Activated CD4-positive, alpha-beta T cell treated with anti-CD3 and anti-CD28 coated beads for 36 hours (primary cell): ENCODE measurements at regions of chr11 and their contacts with region 1.

Region 1: GRCh38 chr11:73661035-73661628 is 14.8 kb downstream of the PLEKHB1 start:
- DNase-seq: peak; percentile 92
- ATAC-seq: peak; percentile 92
- H3K4me3 Mint-ChIP-seq: peak overlapping the region; percentile 24
- H3K27ac Mint-ChIP-seq: no peak overlapping the region
- H3K4me1 Mint-ChIP-seq: peaks cover 10% of the 10 kb centered on the region
- H3K27me3 Mint-ChIP-seq: no peaks in the 10 kb centered on the region

Region 2: GRCh38 chr11:73350908-73351636 is 310.1 kb before region 1 on chr11:
- CTCF ChIA-PET with region 1: interaction called, 75 read pairs
- POLR2A ChIA-PET with region 1: interaction called, 3 read pairs
- intact Hi-C with region 1: loop called (anchors 1 kb)
- DNase-seq: peak; percentile 75
- ATAC-seq: peak; percentile 85
- H3K4me3 Mint-ChIP-seq: no peak overlapping the region
- H3K27ac Mint-ChIP-seq: no peak overlapping the region
- H3K4me1 Mint-ChIP-seq: peaks cover 2% of the 10 kb centered on the region
- H3K27me3 Mint-ChIP-seq: no peaks in the 10 kb centered on the region

Region 3: DNA sequence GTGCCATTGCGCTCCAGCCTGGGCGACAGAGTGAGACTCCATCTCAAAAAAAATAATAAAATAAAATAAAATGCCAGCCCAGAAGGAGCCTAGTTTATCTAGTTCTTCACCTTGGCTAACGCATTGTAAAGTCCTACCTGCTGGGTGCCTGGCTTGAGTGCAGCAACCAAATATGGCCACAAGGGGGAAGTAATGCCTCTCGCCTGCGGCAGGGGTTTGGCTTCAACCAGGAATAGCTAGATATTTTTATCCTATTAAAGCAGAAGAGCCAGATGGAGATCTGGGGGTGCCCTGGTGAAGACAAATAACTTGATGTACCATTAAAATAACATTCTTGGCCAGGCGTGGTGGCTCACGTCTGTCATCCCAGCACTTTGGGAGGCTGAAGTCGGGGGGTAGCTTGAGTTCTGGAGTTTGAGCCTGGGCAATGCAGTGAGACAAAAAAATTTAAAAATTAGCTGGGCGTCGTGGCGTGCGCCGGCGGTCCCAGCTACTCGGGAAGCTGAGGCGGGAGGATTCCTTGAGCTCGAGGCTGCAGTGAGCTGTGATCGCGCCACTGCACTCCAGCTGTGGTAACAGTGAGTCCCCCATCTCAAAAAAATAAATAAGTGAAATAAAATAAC is 35.3 kb before region 1 on chr11:
- CTCF ChIA-PET with region 1: interaction called, 218 read pairs
- POLR2A ChIA-PET with region 1: interaction called, 3 read pairs
- intact Hi-C with region 1: loop called (anchors 1 kb)
- DNase-seq: peak; percentile 81
- ATAC-seq: peak; percentile 91
- H3K4me3 Mint-ChIP-seq: no peak overlapping the region
- H3K27ac Mint-ChIP-seq: no peak overlapping the region
- H3K4me1 Mint-ChIP-seq: no peaks in the 10 kb centered on the region
- H3K27me3 Mint-ChIP-seq: peaks cover 8% of the 10 kb centered on the region

Region 4: DNA sequence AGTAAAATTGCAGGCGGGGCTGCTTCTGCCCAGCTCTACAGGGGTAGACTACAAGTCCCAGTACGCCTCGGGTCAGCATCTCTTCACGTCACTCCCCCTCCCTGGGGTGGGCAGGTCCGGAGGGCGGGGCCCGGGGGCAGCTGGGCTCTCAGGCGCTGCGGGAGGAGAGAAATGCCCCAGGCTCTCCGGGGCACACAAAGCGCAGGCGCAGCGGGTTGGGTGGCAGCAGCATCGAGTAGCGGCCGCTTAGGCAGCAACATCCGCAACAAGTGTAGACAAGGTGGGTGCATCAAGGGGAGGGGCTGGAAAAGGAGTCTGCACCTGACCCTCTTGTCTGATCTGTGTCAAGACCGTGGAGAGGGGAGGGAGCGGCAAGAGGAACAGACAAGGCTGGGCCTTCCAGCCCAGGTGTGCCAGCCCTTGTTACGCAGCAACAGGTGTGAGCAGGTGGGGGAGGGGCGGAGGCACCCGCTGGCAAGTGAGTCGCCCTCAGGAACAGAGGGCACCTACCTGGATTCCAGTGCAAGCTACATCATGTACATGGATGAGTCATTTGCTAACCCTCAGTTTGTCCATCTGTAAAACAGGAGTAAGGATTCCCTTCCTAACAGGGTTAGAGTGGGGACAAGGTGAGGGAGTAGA is 13.6 kb before region 1 on chr11:
- CTCF ChIA-PET with region 1: interaction called, 43 read pairs
- POLR2A ChIA-PET with region 1: no interaction called
- intact Hi-C with region 1: no loop called
- DNase-seq: peak; percentile 96
- ATAC-seq: peak; percentile 100
- H3K4me3 Mint-ChIP-seq: peak overlapping the region; percentile 75
- H3K27ac Mint-ChIP-seq: peak overlapping the region; percentile 86
- H3K4me1 Mint-ChIP-seq: peaks cover 15% of the 10 kb centered on the region
- H3K27me3 Mint-ChIP-seq: no peaks in the 10 kb centered on the region

Region 5: GRCh38 chr11:73680687-73681086 is 19.6 kb after region 1 on chr11:
- CTCF ChIA-PET with region 1: interaction called, 17 read pairs
- POLR2A ChIA-PET with region 1: no interaction called
- intact Hi-C with region 1: no loop called
- DNase-seq: no peak
- ATAC-seq: no peak
- H3K4me3 Mint-ChIP-seq: no peak overlapping the region
- H3K27ac Mint-ChIP-seq: no peak overlapping the region
- H3K4me1 Mint-ChIP-seq: no peaks in the 10 kb centered on the region
- H3K27me3 Mint-ChIP-seq: no peaks in the 10 kb centered on the region

Region 6: GRCh38 chr11:73894725-73895335 is 233.7 kb after region 1 on chr11:
- CTCF ChIA-PET with region 1: no interaction called
- POLR2A ChIA-PET with region 1: no interaction called
- intact Hi-C with region 1: no loop called
- DNase-seq: no peak
- ATAC-seq: no peak
- H3K4me3 Mint-ChIP-seq: no peak overlapping the region
- H3K27ac Mint-ChIP-seq: no peak overlapping the region
- H3K4me1 Mint-ChIP-seq: peaks cover 1% of the 10 kb centered on the region
- H3K27me3 Mint-ChIP-seq: no peaks in the 10 kb centered on the region

Region 7: DNA sequence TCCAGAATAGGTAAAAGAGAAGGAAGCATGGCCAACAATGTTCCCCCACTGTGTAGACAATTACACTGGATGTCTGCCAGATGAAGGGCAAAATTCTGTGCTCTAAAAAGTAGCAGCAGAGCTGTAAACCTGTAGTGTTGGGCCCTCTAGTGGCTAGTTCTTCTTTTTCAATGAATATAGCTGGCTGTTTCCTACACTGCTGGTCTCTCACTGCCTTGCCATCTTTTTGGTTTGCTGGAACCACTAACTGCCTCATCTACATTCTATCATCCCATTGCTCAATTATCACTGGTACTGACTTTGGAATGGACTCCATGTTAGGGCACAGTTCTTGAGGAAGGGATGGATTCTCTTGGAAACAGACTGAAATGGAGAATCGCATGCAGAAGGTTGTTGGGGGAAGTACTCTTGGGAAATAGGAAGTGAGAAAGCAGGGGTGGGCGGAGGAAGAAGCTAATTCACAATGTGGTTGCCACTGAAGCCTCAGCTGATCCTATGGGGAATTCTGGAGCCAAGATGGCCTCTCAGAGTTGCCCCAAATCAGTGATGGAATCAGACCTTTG is 788.3 kb after region 1 on chr11:
- CTCF ChIA-PET with region 1: no interaction called
- POLR2A ChIA-PET with region 1: no interaction called
- intact Hi-C with region 1: no loop called
- DNase-seq: peak; percentile 47
- ATAC-seq: peak; percentile 94
- H3K4me3 Mint-ChIP-seq: no peak overlapping the region
- H3K27ac Mint-ChIP-seq: no peak overlapping the region
- H3K4me1 Mint-ChIP-seq: peaks cover 4% of the 10 kb centered on the region
- H3K27me3 Mint-ChIP-seq: peaks cover 6% of the 10 kb centered on the region